Common myeloid progenitor, CD34-positive (primary cell): ENCODE measurements at regions of chr11 and their contacts with region 1.

Region 1: GRCh38 chr11:102914238-102915043 is 39.7 kb upstream of the MMP12 start:
- DNase-seq: peak; percentile 44 to 64 (median 46)
- H3K4me3 ChIP-seq: no peak overlapping the region
- H3K27ac ChIP-seq: no peak overlapping the region
- H3K4me1 ChIP-seq: peaks cover 0 to 3% (median under 1%) of the 10 kb centered on the region in 4 experiments
- H3K27me3 ChIP-seq: peaks cover 0 to 9% (median 7%) of the 10 kb centered on the region in 5 experiments

Region 2: GRCh38 chr11:102850973-102851745 is 63.3 kb before region 1 on chr11:
- CTCF ChIA-PET with region 1: no interaction called
- POLR2A ChIA-PET with region 1: no interaction called
- DNase-seq: no peak
- H3K4me3 ChIP-seq: no peak overlapping the region
- H3K27ac ChIP-seq: no peak overlapping the region
- H3K4me1 ChIP-seq: no peaks in the 10 kb centered on the region
- H3K27me3 ChIP-seq: peaks cover 0 to 11% (median 4%) of the 10 kb centered on the region in 5 experiments

Region 3: DNA sequence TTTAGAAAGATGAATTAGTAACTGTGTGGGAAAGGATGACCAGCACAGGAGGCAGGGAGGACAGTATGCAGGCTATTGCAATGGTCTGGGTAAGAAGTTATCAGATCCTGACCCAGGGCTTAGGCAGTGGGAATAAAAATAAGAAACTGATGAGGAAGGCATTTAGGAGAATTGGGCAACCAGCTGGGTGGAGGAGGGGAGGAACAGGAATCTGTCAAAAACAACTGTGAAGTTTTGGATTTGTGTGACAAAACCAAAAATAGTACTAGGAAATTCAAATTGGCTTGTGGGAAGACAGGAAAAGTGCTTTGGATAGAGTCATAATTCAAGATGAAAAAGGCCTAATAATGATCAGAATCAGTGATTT is 13.2 kb after region 1 on chr11:
- CTCF ChIA-PET with region 1: interaction called, 22 read pairs
- POLR2A ChIA-PET with region 1: no interaction called
- DNase-seq: no peak
- H3K4me3 ChIP-seq: no peak overlapping the region
- H3K27ac ChIP-seq: no peak overlapping the region
- H3K4me1 ChIP-seq: peaks cover 0 to 14% (median 5%) of the 10 kb centered on the region in 4 experiments
- H3K27me3 ChIP-seq: peaks cover 0 to 22% (median 6%) of the 10 kb centered on the region in 5 experiments

Region 4: DNA sequence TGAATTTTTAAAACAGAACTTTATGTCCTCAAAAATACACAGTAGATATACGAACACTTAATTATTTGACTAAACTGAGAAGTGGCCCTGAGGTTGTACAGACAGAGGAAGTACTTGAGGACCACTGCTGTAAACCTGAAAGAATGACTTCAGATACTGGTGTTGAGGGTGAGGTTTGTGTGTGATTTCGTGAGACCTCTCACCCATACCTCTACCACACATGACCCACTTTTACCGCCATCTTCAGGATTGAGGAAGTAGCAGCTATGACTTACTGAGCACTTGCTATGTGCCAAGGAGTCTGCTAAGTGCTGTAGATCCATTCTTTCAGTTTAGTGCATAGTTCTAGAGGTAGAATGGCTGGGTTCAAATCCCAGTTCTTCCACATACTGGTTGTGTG is 19.2 kb after region 1 on chr11:
- CTCF ChIA-PET with region 1: interaction called, 27 read pairs
- POLR2A ChIA-PET with region 1: no interaction called
- DNase-seq: peak in 2 of 3 donors; percentile 40 to 46
- H3K4me3 ChIP-seq: no peak overlapping the region
- H3K27ac ChIP-seq: no peak overlapping the region
- H3K4me1 ChIP-seq: no peaks in the 10 kb centered on the region
- H3K27me3 ChIP-seq: peaks cover 0 to 18% (median 5%) of the 10 kb centered on the region in 5 experiments

Region 5: DNA sequence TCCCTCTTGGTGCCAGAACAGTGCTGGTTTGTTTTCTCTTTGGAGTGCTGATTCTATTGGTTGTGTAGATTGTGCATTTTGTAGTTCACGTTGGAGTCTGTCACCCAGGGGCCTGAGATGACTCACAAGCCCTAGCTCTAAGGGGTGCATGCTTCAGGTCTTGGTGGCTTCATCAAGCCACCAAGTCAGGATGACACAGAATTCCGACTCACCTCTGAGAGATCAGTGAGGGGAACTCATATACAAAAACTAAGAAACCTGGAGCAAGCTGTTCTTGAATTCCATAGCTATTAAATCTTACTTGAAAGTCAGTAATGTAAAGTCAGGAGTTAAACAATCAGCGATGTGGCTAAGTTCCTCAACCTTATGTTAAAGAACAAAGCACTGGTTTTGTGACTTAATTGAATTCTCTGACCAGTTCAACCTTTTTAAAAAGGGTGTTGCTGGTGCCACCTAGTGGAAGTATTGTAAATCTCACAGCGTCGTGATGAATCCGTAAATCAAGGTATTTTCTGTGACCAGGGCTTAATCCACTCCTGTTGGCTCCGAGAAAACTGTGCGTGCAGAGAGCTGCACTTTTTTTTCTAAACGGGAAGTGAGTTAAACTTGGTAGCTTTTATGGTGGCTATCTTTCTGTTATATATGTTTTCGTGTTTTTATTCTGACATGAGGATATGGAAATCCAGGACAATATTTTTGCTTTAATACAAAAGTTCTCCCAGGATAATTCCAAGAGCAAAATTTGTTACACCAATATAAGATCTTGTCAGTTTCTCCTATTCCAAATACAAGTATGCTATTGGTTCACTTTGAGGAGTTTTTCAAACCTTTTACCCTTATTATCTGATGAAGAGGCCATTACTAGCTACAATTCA is 26.5 kb after region 1 on chr11:
- CTCF ChIA-PET with region 1: interaction called, 80 read pairs
- POLR2A ChIA-PET with region 1: interaction called, 4 read pairs
- DNase-seq: peak; percentile 77 to 89 (median 84)
- H3K4me3 ChIP-seq: no peak overlapping the region
- H3K27ac ChIP-seq: no peak overlapping the region
- H3K4me1 ChIP-seq: peaks cover 0 to 2% (median 0%) of the 10 kb centered on the region in 4 experiments
- H3K27me3 ChIP-seq: peaks cover 0 to 3% (median 0%) of the 10 kb centered on the region in 5 experiments

Region 6: DNA sequence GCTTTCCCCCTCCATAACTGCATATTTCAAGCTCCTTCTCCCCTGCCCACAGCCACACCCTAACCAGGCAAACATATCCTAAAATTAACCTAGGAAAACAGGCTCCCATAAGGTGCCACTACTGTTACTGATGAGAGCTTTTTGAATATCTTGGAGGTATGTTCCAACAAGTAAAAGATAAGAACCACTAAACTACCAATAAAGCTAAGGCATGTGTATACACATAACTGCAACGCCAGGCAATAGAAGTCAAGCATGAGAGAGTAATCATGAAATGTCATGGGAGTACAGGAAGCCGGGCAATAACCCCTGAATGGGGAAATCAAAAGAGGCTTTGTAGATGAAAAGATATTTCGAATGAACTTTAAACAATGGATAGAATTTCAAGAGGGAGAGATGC is 31.8 kb after region 1 on chr11:
- CTCF ChIA-PET with region 1: interaction called, 80 read pairs
- POLR2A ChIA-PET with region 1: interaction called, 4 read pairs
- DNase-seq: no peak
- H3K4me3 ChIP-seq: no peak overlapping the region
- H3K27ac ChIP-seq: no peak overlapping the region
- H3K4me1 ChIP-seq: peaks cover 0 to under 1% (median 0%) of the 10 kb centered on the region in 4 experiments
- H3K27me3 ChIP-seq: peaks cover 0 to 4% (median 0%) of the 10 kb centered on the region in 5 experiments

Region 7: DNA sequence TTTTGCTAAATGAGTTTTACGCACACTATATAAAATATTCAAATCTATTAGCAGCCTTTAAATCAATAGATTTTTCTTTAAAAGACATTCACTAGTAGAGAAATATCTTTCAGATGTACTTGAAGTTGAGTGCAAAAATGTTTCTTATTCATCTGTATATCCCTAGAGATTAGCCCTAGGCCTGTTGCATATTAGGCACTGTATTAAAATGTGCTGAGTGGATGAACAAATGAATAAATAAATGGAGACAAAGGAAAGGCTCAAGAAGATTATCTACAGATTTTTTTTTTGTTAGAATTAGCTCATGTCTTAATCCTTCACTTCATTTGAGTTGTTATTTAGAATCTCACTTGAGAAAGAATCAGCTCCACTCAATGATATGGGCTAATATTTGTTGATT is 53.1 kb after region 1 on chr11:
- CTCF ChIA-PET with region 1: no interaction called
- POLR2A ChIA-PET with region 1: no interaction called
- DNase-seq: no peak
- H3K4me3 ChIP-seq: no peak overlapping the region
- H3K27ac ChIP-seq: no peak overlapping the region
- H3K4me1 ChIP-seq: no peaks in the 10 kb centered on the region
- H3K27me3 ChIP-seq: peaks cover 0 to 5% (median 2%) of the 10 kb centered on the region in 5 experiments